Activated B cell treated with CpG ODN at 0.5 μM for 24 hours (primary cell): ENCODE measurements at regions of chr1 and their contacts with region 1.

Region 1: DNA sequence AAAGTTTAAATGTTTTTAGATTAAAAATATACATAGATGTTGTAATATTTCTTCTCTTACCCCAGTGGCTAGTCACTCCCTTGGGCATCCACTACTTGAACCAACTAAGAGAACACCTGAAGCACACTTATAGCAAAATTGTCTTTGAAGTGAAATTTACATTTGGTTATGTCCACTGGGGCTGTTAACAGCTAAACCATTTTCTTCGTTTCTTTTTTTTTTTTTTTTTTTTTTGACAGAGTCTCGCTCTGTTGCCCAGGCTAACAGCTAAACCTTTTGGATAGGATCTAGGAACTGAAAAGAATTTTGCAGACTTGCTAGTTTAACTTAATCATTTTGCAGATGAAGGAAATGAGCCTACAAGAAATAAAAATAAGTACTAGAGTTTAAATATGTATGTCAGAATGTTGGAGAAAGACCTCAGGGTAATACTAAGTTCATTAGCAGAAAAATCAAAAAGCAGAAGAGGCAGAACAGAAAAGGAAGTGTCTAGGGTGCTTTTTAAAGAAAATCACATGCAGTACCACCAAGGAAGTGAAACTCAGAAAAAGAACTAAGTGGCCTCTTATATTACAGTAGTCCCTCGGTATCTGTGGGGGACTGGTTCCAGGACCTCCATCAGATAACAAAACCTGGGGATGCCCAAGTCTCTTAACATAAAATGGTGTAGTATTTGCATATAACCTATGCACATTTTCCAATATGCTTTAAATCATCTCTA is 11.8 kb downstream of the DRAM2 start:
- DNase-seq: no peak
- ATAC-seq: peak; percentile 83
- H3K4me3 Mint-ChIP-seq: peak overlapping the region; percentile 52
- H3K27ac Mint-ChIP-seq: peak overlapping the region; percentile 95
- H3K4me1 Mint-ChIP-seq: peaks cover 96% of the 10 kb centered on the region
- H3K27me3 Mint-ChIP-seq: no peaks in the 10 kb centered on the region
- CTCF ChIP-seq: no peak

Region 2: DNA sequence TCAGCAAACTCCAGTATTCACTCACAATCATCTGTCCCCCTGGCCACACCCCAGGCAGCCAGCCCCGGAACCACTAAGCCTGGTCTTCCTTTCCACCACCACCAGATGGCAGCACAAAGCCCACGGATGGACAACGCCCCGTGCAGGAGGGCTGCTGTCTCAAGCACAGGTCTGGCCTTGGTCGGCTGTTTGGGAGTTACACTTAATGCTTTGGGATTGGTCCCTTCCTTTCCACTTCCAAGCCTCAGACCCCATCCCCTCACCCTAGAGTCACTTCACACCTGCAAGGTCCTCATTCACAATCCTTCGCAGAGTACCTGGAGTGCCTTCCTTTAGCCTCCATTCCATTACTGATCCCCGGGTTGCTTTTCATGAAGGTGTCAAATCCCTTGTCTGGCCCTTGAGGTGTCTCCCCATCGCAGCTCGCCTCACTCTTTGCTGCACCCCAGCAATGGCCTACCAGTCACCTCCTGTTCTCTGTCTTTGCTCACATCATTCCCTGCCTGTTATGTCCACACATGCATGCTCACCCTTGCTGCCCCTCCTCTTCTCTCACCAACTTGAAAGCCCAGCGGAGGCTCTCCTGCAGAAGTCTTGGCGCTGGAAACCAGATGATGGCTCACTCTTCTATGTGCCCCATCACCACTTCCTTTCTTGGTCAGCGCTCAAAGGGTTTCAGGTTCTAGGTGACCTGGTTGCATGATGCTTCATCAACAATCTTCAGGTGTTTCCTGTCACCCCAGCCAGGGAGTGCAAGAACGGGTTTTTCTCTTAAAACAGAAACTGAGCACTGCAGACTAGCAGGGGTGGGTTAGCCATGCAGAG is 497.0 kb before region 1 on chr1:
- CTCF ChIA-PET with region 1: no interaction called
- POLR2A ChIA-PET with region 1: no interaction called
- intact Hi-C with region 1: loop called (anchors 5 kb)
- DNase-seq: peak; percentile 72
- ATAC-seq: peak; percentile 73
- H3K4me3 Mint-ChIP-seq: no peak overlapping the region
- H3K27ac Mint-ChIP-seq: no peak overlapping the region
- H3K4me1 Mint-ChIP-seq: peaks cover 46% of the 10 kb centered on the region
- H3K27me3 Mint-ChIP-seq: no peaks in the 10 kb centered on the region
- CTCF ChIP-seq: peak; percentile 82

Region 3: DNA sequence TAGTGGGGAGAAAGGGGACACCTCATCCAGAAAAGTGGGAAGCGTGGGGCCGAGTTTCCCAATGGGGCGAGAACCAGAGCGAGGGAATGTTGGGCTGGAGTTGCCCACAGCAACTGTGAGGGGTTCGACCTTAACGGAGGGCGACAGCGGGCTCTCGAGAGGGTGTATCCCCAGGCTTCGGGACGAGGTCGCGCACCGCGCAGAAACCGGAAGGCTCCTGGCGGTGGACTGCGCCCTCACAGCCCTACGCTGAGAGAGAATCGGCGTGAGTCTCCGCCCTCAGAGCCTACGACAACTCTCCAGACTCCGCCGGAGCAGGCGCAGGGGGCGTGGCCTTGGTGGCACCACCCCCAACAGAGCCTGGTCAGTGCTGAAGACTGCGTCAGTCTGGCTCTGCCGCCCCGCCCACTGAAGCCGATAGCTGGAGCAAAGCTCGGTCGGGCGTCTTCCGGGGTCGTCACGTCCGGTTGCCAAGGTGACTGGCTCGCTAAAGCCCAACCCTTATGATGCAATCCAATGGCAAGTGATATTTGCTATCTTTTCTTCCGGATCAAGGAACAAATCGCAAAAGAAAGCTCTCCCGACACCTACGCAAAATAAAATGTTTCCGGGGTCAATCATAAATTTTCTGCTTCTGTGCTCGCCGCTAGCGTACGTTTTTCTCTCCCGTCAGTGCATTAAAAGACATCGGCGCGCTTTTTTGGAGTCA is 164.2 kb before region 1 on chr1 and contains the start of gene LRIF1:
- CTCF ChIA-PET with region 1: no interaction called
- POLR2A ChIA-PET with region 1: interaction called, 6 read pairs
- intact Hi-C with region 1: loop called (anchors 5 kb)
- DNase-seq: peak; percentile 99
- ATAC-seq: peak; percentile 97
- H3K4me3 Mint-ChIP-seq: peak within 1 kb of the TSS; percentile 84
- H3K27ac Mint-ChIP-seq: peak within 1 kb of the TSS; percentile 91
- H3K4me1 Mint-ChIP-seq: peaks cover 38% of the 10 kb centered on the region
- H3K27me3 Mint-ChIP-seq: peaks cover 10% of the 10 kb centered on the region
- CTCF ChIP-seq: no peak
- total RNA-seq, gene LRIF1: 16.7 and 17.0 TPM in 2 replicates

Region 4: DNA sequence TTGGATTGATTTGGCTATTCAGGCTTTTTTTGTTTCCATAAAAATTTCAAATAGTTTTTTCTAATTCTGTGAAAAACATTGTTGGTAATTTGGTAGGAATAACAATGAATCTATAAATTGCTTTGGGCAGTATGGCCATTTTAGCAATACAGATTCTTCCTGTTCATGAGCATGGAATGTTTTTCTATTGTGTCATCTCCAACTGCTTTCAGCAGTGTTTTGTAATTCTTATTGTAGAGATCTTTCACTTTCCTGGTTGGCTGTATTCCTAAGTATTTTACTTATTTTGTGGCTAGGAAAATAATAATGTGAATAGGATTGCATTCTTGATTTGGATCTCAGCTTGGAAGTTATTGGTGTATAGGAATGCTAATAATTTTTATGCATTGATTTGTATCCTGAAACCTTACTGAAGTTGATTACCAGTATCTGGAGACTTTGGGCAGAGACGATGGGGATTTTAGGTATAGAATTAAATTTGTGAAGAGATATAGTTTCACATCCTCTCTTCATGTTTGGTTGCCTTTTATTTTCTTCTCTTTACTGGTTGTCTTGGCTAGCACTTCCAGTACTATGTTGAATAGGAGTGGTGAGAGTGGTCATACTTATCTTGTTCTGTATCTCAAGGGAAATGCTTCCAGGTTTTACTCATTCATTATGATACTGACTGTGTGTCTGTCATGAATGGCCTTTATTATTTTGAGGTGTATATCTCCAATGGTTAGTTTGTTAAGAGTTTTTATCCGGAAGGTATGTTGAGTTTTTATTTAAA is 45.5 kb before region 1 on chr1:
- CTCF ChIA-PET with region 1: no interaction called
- POLR2A ChIA-PET with region 1: no interaction called
- intact Hi-C with region 1: loop called (anchors 5 kb)
- DNase-seq: no peak
- ATAC-seq: peak; percentile 75
- H3K4me3 Mint-ChIP-seq: peak overlapping the region; percentile 21
- H3K27ac Mint-ChIP-seq: peak overlapping the region; percentile 68
- H3K4me1 Mint-ChIP-seq: peaks cover 26% of the 10 kb centered on the region
- H3K27me3 Mint-ChIP-seq: no peaks in the 10 kb centered on the region
- CTCF ChIP-seq: no peak

Region 5: GRCh38 chr1:111139956-111140679 is 12.0 kb after region 1 on chr1 and contains the starts of genes CEPT1 and DRAM2:
- CTCF ChIA-PET with region 1: interaction called, 5 read pairs
- POLR2A ChIA-PET with region 1: interaction called, 114 read pairs
- intact Hi-C with region 1: loop called (anchors 1 kb)
- DNase-seq: peak; percentile 90
- ATAC-seq: peak; percentile 78
- H3K4me3 Mint-ChIP-seq: peak within 1 kb of the TSS; percentile 100
- H3K27ac Mint-ChIP-seq: peak within 1 kb of the TSS; percentile 99
- H3K4me1 Mint-ChIP-seq: peaks cover 74% of the 10 kb centered on the region
- H3K27me3 Mint-ChIP-seq: no peaks in the 10 kb centered on the region
- CTCF ChIP-seq: no peak
- total RNA-seq, gene CEPT1: 74.4 and 87.0 TPM in 2 replicates
- total RNA-seq, gene DRAM2: 61.8 and 77.6 TPM in 2 replicates

Region 6: GRCh38 chr1:111214074-111214801 is 86.2 kb after region 1 on chr1:
- CTCF ChIA-PET with region 1: interaction called, 3 read pairs
- POLR2A ChIA-PET with region 1: interaction called, 15 read pairs
- intact Hi-C with region 1: loop called (anchors 1 kb)
- DNase-seq: no peak
- ATAC-seq: no peak
- H3K4me3 Mint-ChIP-seq: peak overlapping the region; percentile 42
- H3K27ac Mint-ChIP-seq: peak overlapping the region; percentile 95
- H3K4me1 Mint-ChIP-seq: peaks cover 76% of the 10 kb centered on the region
- H3K27me3 Mint-ChIP-seq: no peaks in the 10 kb centered on the region
- CTCF ChIP-seq: no peak

Region 7: DNA sequence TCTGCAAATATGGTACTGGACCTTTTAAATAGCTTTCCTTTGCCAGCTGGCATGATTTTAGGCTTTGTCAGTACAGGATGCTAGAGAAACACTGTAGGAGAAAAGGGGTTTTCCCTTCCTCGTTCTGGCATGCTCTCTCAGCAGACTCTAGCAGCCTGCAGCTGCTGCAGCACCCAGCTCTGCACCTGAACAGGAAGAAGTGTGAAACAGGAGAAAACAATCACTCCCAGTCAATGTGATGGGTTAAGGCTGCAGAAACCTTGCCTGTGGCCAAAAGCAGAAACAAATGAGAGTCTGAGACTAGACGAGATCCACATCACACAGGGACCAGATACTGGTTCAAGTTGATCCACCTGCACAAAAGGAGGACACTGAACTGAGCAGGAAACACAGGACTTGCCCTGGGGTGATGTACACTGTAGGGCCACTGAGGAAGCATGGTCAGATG is 278.3 kb after region 1 on chr1:
- CTCF ChIA-PET with region 1: no interaction called
- POLR2A ChIA-PET with region 1: no interaction called
- intact Hi-C with region 1: loop called (anchors 5 kb)
- DNase-seq: peak; percentile 29
- ATAC-seq: peak; percentile 98
- H3K4me3 Mint-ChIP-seq: peak overlapping the region; percentile 33
- H3K27ac Mint-ChIP-seq: peak overlapping the region; percentile 72
- H3K4me1 Mint-ChIP-seq: peaks cover 35% of the 10 kb centered on the region
- H3K27me3 Mint-ChIP-seq: no peaks in the 10 kb centered on the region
- CTCF ChIP-seq: no peak